Panc1 (cell line): ENCODE measurements at regions of chr13 and their contacts with region 1.

Region 1: GRCh38 chr13:52677823-52678222 is 25.2 kb downstream of the SUGT1 start:
- DNase-seq: no peak
- ATAC-seq: no peak
- H3K4me3 ChIP-seq: no peak overlapping the region
- H3K27ac ChIP-seq: no peak overlapping the region
- H3K4me1 ChIP-seq: no peaks in the 10 kb centered on the region
- H3K27me3 ChIP-seq: no peaks in the 10 kb centered on the region
- CTCF ChIP-seq: no peak

Region 2: DNA sequence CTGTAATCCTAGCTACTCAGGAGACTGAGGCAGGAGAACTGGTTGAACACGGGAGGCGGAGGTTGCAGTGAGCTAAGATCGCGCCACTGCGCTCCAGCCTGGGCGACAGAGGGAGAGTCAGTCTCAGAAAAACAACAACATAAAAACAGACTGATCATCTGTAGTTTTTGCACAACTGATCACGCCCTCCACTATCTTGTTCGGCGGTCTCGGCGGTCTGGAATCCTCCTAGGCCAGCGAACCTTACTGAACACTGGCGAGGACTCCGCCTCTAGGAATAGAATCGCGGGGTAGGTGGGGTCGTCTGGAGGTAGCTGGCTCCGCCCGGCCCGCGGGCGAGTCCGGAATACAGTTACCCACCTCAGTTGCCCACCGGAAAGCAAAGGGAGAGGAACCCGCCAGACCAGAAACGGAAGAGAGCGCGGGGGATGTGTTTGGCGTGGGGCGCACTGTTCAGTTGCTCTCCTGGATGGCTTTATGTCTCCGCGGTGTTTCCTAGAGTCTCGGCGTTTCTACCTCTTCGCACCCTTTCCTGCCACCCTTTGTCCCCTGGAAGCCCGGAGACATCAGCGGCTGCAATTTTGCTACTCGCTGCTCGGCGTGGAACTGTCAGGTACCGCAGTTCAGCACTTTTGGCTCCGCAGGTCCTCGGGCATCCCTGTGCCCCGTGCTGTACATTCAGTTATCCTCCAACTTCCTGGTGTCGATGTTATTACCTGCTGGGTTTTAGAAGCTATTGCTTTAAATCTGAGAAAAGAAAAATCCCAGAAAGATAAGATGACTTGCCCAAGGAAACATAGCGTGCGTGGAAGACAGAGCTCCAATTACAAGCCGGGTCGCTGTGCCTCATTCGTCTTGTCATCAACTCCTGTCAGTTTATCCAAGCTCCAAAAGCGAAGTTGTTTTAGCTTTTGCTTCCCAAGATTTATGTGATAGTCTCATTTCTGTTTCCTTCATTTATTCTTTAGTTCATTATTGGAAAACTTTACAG is 60.5 kb before region 1 on chr13:
- CTCF ChIA-PET with region 1: no interaction called
- POLR2A ChIA-PET with region 1: interaction called, 12 read pairs
- in situ Hi-C with region 1: no loop called
- intact Hi-C with region 1: no loop called
- DNase-seq: peak; percentile 39
- ATAC-seq: peak; percentile 98
- H3K4me3 ChIP-seq: peak overlapping the region; percentile 86
- H3K27ac ChIP-seq: peak overlapping the region; percentile 81
- H3K4me1 ChIP-seq: no peaks in the 10 kb centered on the region
- H3K27me3 ChIP-seq: no peaks in the 10 kb centered on the region
- CTCF ChIP-seq: no peak